CD4-positive, alpha-beta memory T cell (primary cell): ENCODE measurements at regions of chr9 and their contacts with region 1.

Region 1: DNA sequence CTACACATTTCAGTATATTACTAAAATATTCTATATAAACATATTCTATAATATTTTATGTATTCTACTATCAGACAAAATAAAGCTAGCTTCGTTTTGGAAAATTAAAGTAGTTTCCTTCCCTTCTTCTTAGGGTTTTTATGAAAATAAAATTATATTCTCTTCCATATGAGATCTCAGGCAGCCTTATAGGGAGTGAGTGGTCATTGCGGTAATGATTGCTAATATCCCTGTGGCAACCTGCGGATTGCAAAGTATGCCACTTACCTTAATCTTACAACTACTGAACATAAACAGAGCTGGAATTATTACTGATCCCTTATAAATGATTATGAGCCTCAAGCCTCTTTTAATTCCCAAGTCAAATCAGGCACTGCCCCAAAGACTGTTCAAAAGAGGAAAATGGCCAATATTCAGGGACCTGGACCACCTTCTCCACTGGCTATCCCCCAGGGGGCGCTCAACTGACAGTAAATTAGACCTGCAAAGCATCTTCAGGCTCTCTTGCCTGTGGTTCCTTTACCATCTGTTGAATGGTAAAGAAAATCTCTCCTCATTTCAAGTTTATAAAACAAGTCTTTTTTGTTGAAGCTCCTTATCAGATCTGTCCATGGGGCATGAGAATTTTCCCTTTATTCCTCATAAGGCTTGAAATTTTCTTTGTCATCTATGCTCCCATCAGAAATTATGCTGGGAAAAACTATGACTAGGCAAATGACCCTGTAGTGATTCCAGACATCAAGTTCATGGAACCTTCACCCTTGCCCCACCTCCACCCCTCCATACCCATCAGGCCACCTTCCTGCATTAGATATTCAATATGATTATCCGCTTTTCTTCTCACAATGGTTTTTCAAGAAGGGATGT is 163.9 kb downstream of the CEMIP2 start:
- DNase-seq: peak; percentile 73 to 79 (median 75)
- H3K4me3 ChIP-seq: no peak overlapping the region
- H3K4me3 Mint-ChIP-seq: no peak overlapping the region
- H3K27ac ChIP-seq: no peak overlapping the region
- H3K27ac Mint-ChIP-seq: no peak overlapping the region
- H3K4me1 ChIP-seq: no peaks in the 10 kb centered on the region
- H3K4me1 Mint-ChIP-seq: no peaks in the 10 kb centered on the region
- H3K27me3 ChIP-seq: no peaks in the 10 kb centered on the region
- H3K27me3 Mint-ChIP-seq: no peaks in the 10 kb centered on the region

Region 2: GRCh38 chr9:71614409-71615010 is 10.1 kb after region 1 on chr9:
- CTCF ChIA-PET with region 1: interaction called, 12 read pairs
- POLR2A ChIA-PET with region 1: no interaction called
- intact Hi-C with region 1: no loop called
- DNase-seq: no peak
- H3K4me3 ChIP-seq: no peak overlapping the region
- H3K4me3 Mint-ChIP-seq: no peak overlapping the region
- H3K27ac ChIP-seq: no peak overlapping the region
- H3K27ac Mint-ChIP-seq: no peak overlapping the region
- H3K4me1 ChIP-seq: no peaks in the 10 kb centered on the region
- H3K4me1 Mint-ChIP-seq: no peaks in the 10 kb centered on the region
- H3K27me3 ChIP-seq: no peaks in the 10 kb centered on the region
- H3K27me3 Mint-ChIP-seq: peaks cover 0 to 1% of the 10 kb centered on the region in 2 donors

Region 3: DNA sequence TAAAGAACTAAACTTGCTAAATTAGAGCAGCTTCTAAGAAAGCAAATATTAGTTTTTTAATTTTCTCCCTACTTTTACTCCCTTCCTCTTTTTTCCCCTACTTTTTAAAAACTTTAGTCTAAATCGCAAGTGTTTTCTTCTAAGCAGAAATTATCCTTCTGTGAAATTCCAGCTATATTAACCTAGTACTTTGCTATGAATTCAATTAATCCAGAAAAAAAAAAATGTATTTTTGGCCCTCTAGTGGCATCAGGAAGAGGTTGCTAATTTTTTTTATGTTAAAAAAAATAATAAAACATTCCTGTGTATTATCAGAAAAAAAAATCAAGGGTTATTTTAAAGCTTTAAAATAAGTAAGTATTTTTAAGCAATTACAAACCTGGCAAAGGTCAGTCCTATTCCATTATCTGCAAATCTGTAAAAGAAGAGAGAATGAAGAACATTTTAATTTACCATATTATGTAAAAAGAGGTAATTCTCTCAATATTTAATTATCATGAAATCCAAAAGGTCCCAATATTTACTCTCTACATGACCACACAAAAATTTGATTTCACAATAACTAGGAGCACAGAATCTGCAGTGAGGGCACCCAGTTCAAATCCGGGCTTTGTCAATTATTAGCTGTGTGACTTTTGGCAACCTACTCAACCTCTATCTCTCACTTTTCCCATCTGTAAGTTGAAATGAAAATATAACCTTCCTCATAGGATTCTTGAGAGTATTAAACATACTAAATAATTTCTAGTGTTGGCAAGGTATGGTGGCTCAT is 111.9 kb after region 1 on chr9:
- CTCF ChIA-PET with region 1: interaction called, 26 read pairs
- POLR2A ChIA-PET with region 1: no interaction called
- intact Hi-C with region 1: loop called (anchors 2 kb)
- DNase-seq: peak in 2 of 5 donors; percentile 17 to 24
- H3K4me3 ChIP-seq: no peak overlapping the region
- H3K4me3 Mint-ChIP-seq: no peak overlapping the region
- H3K27ac ChIP-seq: no peak overlapping the region
- H3K27ac Mint-ChIP-seq: peak overlapping the region in 4 of 7 donors; percentile 29 to 75 (median 74)
- H3K4me1 ChIP-seq: no peaks in the 10 kb centered on the region
- H3K4me1 Mint-ChIP-seq: peaks cover 0 to 15% (median 9%) of the 10 kb centered on the region in 4 donors
- H3K27me3 ChIP-seq: no peaks in the 10 kb centered on the region
- H3K27me3 Mint-ChIP-seq: no peaks in the 10 kb centered on the region

Region 4: DNA sequence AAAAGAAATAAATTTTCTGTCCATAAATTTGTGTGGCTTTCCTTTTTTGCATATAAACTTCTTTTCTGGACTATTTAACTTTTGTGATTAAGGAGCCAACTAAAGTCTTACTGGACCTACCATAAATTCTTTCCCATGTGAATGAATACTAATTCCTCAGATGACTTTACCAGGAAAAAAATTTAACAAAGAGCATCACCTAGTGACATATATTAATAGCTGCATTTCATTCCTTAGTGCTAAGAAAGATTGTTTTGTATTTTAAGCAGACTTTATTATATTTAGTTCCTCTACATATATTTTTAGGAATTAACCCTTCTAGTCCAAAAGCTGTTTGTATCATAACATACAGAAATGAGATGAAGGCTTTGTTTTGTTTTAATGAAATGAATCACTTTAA is 371.4 kb after region 1 on chr9:
- CTCF ChIA-PET with region 1: interaction called, 10 read pairs
- POLR2A ChIA-PET with region 1: no interaction called
- intact Hi-C with region 1: no loop called
- DNase-seq: no peak
- H3K4me3 ChIP-seq: no peak overlapping the region
- H3K4me3 Mint-ChIP-seq: no peak overlapping the region
- H3K27ac ChIP-seq: no peak overlapping the region
- H3K27ac Mint-ChIP-seq: no peak overlapping the region
- H3K4me1 ChIP-seq: no peaks in the 10 kb centered on the region
- H3K4me1 Mint-ChIP-seq: peaks cover 0 to 2% (median 0%) of the 10 kb centered on the region in 4 donors
- H3K27me3 ChIP-seq: no peaks in the 10 kb centered on the region
- H3K27me3 Mint-ChIP-seq: no peaks in the 10 kb centered on the region